Activated naive CD4-positive, alpha-beta T cell treated with anti-CD3 and anti-CD28 coated beads for 36 hours (primary cell): ENCODE measurements at regions of chr14 and their contacts with region 1.

Region 1: GRCh38 chr14:23174276-23175184 is 8.9 kb downstream of the SLC7A8 start:
- DNase-seq: no peak
- H3K4me3 Mint-ChIP-seq: no peak overlapping the region
- H3K27ac Mint-ChIP-seq: no peak overlapping the region
- H3K4me1 Mint-ChIP-seq: peaks cover 31% of the 10 kb centered on the region
- H3K27me3 Mint-ChIP-seq: peaks cover 4% of the 10 kb centered on the region

Region 2: GRCh38 chr14:23186913-23187654 is 12.6 kb after region 1 on chr14:
- CTCF ChIA-PET with region 1: interaction called, 37 read pairs
- intact Hi-C with region 1: no loop called
- DNase-seq: peak; percentile 55
- H3K4me3 Mint-ChIP-seq: no peak overlapping the region
- H3K27ac Mint-ChIP-seq: no peak overlapping the region
- H3K4me1 Mint-ChIP-seq: no peaks in the 10 kb centered on the region
- H3K27me3 Mint-ChIP-seq: no peaks in the 10 kb centered on the region